Sciatic nerve (tissue), 2 donors: ENCODE measurements at regions of chr1 and their contacts with region 1.

Region 1: GRCh38 chr1:48127735-48128685 is 94.5 kb upstream of the SLC5A9 start:
- DNase-seq: no peak
- ATAC-seq: no peak

Region 2: GRCh38 chr1:46812065-46812963 is 1315.7 kb before region 1 on chr1:
- intact Hi-C with region 1: loop called (anchors 5 kb)
- DNase-seq: no peak
- ATAC-seq: no peak